ENCODE measurements at regions of chr17 and their contacts with region 1.

Region 1: GRCh38 chr17:33038740-33039139 is 47.1 kb downstream of the SPACA3 start:
- DNase-seq: peak in 6 of 10 donors; percentile 31 to 71 (median 53)
- H3K4me3 ChIP-seq: no peak overlapping the region
- H3K27ac ChIP-seq: peak overlapping the region in 1 of 59 donors; percentile 31
- H3K27me3 ChIP-seq: peaks cover 0 to 17% (median 0%) of the 10 kb centered on the region in 45 donors
- CTCF ChIP-seq: peak; percentile 31 to 73 (median 63)

Region 2: GRCh38 chr17:33091271-33091670 is 52.5 kb after region 1 on chr17:
- intact Hi-C with region 1: no loop called
- DNase-seq: peak in 5 of 10 donors; percentile 12 to 67 (median 53)
- H3K4me3 ChIP-seq: no peak overlapping the region
- H3K27ac ChIP-seq: peak overlapping the region in 12 of 59 donors; percentile 6 to 66 (median 28)
- H3K27me3 ChIP-seq: peaks cover 0 to 32% (median 0%) of the 10 kb centered on the region in 45 donors
- CTCF ChIP-seq: no peak

Region 3: DNA sequence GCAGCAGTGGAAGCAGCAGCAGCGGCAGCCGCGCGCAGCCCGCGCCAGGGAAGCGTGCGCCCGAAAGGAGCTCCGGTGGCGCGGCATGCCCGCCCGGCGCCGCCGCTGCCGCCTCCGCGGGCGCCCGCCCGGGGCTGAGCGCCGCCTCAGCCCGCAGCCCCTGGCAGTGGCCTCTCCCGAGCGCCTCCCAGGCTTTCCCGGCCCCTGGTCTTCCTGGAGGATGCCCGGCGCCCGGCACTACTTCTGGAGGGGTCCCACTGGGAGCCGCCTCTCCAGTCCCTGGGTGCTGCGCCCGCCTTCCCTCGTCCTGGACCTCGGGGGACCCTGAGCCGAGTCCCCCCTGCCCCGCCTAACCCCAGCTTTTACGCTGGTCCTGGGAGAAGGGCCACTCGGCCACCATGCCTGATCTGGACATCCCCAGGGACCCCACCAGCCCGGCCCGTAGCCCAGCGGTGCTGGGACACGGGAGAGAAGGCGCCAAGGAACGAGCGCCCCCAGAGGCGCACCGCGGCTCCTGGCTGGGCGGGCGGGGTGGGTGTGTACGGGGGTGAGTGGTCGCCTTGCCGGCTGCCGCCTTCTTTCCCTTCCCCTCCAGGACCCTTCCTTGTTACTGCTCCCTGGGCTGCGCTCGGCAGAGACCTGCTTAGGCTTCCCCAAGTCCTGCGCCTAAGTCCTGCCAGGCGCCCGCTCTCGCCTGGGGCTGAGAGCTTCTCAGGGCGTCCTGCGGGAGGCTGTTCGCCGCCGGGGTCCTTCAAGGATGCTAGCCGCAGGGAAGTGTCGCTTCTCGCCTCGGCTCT is 253.6 kb after region 1 on chr17:
- intact Hi-C with region 1: loop called in 1 of 2 experiments (anchors 5 kb)
- DNase-seq: peak in 4 of 10 donors; percentile 14 to 46 (median 38)
- H3K4me3 ChIP-seq: peak overlapping the region in 58 of 59 donors; percentile 28 to 69 (median 55)
- H3K27ac ChIP-seq: peak overlapping the region in 24 of 59 donors; percentile 21 to 82 (median 52)
- H3K27me3 ChIP-seq: peaks cover 0 to 63% (median 26%) of the 10 kb centered on the region in 45 donors
- CTCF ChIP-seq: peak in 46 of 56 donors; percentile 9 to 57 (median 32)

Region 4: DNA sequence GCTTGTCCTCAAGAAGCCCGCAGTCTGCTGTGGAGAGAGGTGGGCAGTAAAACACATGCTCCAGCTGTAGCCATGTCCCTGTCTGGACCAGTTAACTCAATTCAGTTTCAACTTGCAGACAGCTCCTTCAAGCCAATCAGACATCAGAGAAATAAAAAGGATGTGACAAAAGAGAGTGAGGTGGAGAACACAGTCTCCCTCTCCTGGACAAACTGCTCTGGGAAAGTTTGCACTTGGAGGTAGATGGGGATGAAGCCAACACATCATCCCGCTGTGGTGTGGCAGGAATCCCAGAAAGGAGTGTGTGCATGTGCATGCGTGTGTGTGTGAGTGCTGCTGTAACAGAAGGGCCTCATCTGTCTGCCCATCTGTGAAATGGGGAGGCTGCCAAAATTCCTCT is 612.9 kb after region 1 on chr17:
- intact Hi-C with region 1: loop called in 1 of 2 experiments (anchors 10 kb)
- DNase-seq: peak in 1 of 10 donors; percentile 37
- H3K4me3 ChIP-seq: no peak overlapping the region
- H3K27ac ChIP-seq: no peak overlapping the region
- H3K27me3 ChIP-seq: peaks cover 0 to 6% (median 0%) of the 10 kb centered on the region in 45 donors
- CTCF ChIP-seq: peak in 6 of 56 donors; percentile 10 to 29 (median 17)